GM23248 (cell line): ENCODE measurements at regions of chr7 and their contacts with region 1.

Region 1: DNA sequence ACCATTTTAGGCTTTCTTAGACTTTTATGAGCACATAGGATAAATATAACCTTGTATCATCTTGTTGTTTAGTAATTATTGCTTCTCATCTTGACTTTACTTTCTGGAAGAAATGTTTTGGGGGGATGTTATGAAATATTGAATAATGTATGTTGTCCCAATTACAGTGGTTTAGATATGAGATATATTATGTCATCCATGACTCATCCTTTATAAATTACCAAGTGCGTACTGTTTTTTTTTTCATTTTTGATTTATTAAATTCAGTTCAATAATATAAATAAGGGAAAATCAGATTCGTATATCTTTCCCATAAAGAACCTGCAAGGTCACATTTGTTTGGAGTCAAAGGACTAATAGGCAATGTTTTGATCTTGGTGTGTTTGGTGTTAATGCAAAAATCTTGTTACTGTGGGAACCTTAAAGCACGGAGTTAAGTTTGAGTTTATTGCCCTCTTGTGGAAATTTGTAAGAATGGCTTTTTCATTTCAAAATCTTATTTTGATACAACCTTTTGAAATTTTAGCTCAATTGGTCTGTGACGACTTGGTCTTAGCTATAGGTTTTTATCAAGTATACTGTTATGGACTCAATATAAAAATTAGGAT is 108.6 kb downstream of the SRI start:
- DNase-seq: peak; percentile 67
- H3K4me3 ChIP-seq: no peak overlapping the region
- H3K27ac ChIP-seq: no peak overlapping the region
- H3K4me1 ChIP-seq: no peaks in the 10 kb centered on the region
- H3K27me3 ChIP-seq: no peaks in the 10 kb centered on the region

Region 2: DNA sequence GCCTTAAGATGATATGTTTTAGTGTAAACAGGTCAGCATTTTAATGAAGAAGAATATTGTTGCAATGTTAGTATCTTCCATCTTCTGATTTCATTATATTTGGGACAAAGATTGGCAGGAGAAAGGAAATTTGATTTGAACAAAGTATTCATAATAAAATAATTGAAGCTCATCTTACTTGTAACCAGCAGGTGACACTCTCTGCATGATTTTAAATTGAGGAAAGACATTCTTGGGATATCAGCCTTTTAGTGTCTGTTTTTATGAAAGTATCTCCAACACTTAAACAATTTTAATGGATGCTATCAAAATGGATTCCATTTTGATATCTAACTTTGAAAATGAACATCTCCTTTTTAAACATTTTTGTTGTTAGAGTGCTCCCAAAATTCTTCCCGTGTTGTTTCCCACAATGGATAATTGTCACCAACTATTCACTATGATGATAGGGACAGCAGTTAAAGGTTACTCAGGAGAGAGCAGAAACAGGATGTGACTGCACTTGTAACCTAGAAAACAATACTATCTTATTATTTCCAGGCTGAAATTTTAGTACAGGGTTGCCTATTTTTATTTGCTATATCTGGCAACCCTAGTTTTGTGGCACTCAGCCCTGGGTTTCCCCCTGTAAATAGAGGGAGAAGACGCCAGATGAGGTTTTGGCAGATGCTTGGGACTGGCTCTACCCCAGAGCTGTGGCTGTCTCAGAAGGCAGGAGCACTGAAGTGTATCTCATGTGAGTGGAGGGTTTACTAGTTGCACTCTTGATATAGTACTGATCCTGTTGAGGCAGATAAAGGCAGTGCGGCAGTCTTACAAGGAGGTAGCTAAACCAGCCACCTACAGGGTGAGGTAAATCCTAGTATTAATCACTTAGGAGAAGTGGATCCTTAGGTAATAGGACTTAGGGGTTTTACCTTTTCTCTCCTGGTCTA is 604.7 kb before region 1 on chr7:
- in situ Hi-C with region 1: loop called (anchors 25 kb)
- DNase-seq: peak; percentile 52
- H3K4me3 ChIP-seq: no peak overlapping the region
- H3K27ac ChIP-seq: no peak overlapping the region
- H3K4me1 ChIP-seq: no peaks in the 10 kb centered on the region
- H3K27me3 ChIP-seq: no peaks in the 10 kb centered on the region

Region 3: GRCh38 chr7:87797798-87798403 is 313.3 kb before region 1 on chr7:
- in situ Hi-C with region 1: loop called (anchors 25 kb)
- DNase-seq: peak; percentile 57
- H3K4me3 ChIP-seq: no peak overlapping the region
- H3K27ac ChIP-seq: no peak overlapping the region
- H3K4me1 ChIP-seq: no peaks in the 10 kb centered on the region
- H3K27me3 ChIP-seq: no peaks in the 10 kb centered on the region

Region 4: DNA sequence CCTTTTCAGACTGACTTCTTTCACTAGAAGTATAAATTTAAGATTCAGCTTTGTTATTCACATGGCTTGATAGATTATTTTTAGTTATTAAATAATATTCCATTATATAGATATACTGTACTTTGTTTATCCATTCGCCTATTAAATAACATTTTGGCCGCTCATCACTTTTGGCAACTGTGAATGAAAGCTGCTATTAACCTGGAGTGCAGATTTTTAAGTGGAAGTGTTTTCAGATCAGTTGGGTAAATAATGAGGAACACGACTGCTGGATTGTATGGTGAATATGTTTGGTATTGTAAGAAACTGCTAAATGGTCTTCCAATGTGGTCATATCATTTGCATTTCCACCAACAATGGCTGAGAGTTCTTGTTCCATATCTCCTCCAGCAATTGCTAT is 550.7 kb after region 1 on chr7:
- in situ Hi-C with region 1: no loop called
- DNase-seq: no peak
- H3K4me3 ChIP-seq: no peak overlapping the region
- H3K27ac ChIP-seq: no peak overlapping the region
- H3K4me1 ChIP-seq: no peaks in the 10 kb centered on the region
- H3K27me3 ChIP-seq: no peaks in the 10 kb centered on the region